ENCODE measurements at regions of chr17 and their contacts with region 1.

Region 1: GRCh38 chr17:76121932-76122430 is 18.4 kb upstream of the EXOC7 start:
- DNase-seq: no peak
- H3K4me3 ChIP-seq: peak overlapping the region; percentile 31 to 67 (median 40)
- H3K27ac ChIP-seq: peak overlapping the region in 3 of 4 donors; percentile 50 to 67 (median 61)
- H3K4me1 ChIP-seq: peaks cover 6 to 15% (median 10%) of the 10 kb centered on the region in 3 donors
- H3K27me3 ChIP-seq: no peaks in the 10 kb centered on the region
- CTCF ChIP-seq: no peak
- POLR2A ChIP-seq: no peak

Region 2: GRCh38 chr17:76022285-76022684 is 99.7 kb before region 1 on chr17:
- intact Hi-C with region 1: no loop called
- DNase-seq: no peak
- H3K4me3 ChIP-seq: no peak overlapping the region
- H3K27ac ChIP-seq: no peak overlapping the region
- H3K4me1 ChIP-seq: peaks cover 0 to 28% (median 0%) of the 10 kb centered on the region in 3 donors
- H3K27me3 ChIP-seq: peaks cover 0 to 16% (median 0%) of the 10 kb centered on the region in 4 donors
- CTCF ChIP-seq: no peak
- POLR2A ChIP-seq: no peak

Region 3: DNA sequence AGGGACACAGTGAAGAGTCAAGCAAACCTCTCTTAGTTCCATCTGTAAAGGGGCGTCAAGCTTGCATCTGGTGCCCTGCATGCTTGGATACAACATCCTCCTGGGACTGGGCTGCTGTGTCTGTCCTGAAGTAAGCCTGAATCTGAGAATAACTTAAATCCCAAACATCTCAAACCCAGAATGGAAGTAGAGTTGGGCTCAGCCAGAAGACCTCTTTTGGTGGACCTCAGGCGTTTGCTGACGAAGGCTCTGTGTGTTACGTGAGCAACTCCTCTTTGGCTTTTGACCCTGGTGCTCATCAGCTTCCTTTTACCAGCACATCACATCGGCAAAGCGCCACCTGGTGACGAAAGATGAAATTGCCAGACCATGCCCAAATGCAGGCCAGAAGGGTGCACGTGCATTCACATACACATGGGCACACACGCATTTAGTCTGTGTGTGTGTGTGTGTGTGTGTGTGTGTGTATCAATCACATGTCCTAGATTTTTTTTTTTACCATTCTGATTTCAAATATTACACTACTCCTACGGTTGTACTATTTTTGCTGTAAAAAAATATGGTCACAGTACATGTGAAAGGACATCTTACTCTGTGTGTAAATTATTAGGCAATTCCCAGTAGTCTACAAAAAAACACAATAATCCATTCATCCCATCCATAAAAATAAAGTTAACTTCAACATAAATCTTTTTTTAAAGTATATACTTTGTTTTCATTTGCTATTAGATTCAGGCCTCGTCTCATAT is 60.2 kb after region 1 on chr17:
- intact Hi-C with region 1: loop called (anchors 5 kb)
- DNase-seq: peak; percentile 55
- H3K4me3 ChIP-seq: no peak overlapping the region
- H3K27ac ChIP-seq: no peak overlapping the region
- H3K4me1 ChIP-seq: peaks cover 0 to 7% (median 0%) of the 10 kb centered on the region in 3 donors
- H3K27me3 ChIP-seq: peaks cover 0 to 4% (median 0%) of the 10 kb centered on the region in 4 donors
- CTCF ChIP-seq: peak; percentile 87 to 90 (median 89)
- POLR2A ChIP-seq: no peak

Region 4: GRCh38 chr17:76278952-76279741 is 157.2 kb after region 1 on chr17:
- intact Hi-C with region 1: loop called (anchors 2 kb)
- DNase-seq: peak; percentile 33
- H3K4me3 ChIP-seq: no peak overlapping the region
- H3K27ac ChIP-seq: no peak overlapping the region
- H3K4me1 ChIP-seq: peaks cover 11 to 44% (median 17%) of the 10 kb centered on the region in 3 donors
- H3K27me3 ChIP-seq: no peaks in the 10 kb centered on the region
- CTCF ChIP-seq: peak; percentile 93 to 99 (median 97)
- POLR2A ChIP-seq: no peak

Measured in esophagus squamous epithelium (tissue), 5 donors.